Activated naive CD4-positive, alpha-beta T cell treated with anti-CD3 and anti-CD28 coated beads for 36 hours (primary cell): ENCODE measurements at regions of chrX and their contacts with region 1.

Region 1: DNA sequence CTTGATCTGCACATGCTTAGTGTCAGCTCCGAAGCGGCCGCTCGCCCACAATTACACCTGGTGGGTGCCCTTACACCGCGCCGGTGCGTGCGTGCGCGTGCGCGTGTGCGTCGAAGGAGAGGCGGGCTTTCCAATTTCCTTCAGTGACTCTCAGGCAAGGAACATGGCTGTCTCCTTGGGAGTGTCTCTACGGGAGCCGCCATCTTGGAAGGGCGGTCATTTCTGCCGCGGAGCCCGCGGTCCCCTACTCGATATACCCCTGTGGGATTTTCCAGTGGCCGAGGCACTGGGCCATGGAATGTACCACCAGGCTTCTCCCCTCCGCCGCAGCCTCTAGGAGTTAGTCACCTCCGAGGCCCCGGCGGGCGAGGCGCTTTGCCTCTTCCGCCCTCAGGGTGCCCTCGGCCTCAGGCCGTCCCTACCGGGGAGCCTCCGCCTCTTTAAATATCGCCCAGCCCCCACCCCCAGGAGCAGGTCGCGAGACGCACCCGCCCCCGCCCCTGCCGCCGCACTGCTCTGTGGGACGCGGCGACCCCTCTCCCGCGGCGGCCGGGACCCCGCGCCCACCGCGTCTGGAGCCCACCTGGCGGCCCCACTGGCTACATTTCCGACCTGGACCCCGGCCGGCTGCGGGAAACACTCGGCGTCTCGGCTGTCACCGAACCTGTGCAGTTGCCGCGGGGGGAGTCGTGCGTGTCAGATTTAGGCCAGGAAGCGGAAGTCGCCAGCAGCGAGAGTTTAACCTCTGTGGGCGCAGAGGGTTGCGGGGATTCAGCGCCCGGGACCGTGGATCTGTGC is at the start of gene ZNF41:
- DNase-seq: peak; percentile 75
- H3K4me3 Mint-ChIP-seq: peak within 1 kb of the TSS; percentile 94
- H3K27ac Mint-ChIP-seq: peak within 1 kb of the TSS; percentile 96
- H3K4me1 Mint-ChIP-seq: peaks cover 32% of the 10 kb centered on the region
- H3K27me3 Mint-ChIP-seq: no peaks in the 10 kb centered on the region
- total RNA-seq, gene ZNF41: 4.6 to 6.4 TPM

Region 2: GRCh38 chrX:47129157-47129898 is 353.4 kb before region 1 on chrX:
- CTCF ChIA-PET with region 1: no interaction called
- intact Hi-C with region 1: loop called (anchors 2 kb)
- DNase-seq: peak; percentile 95
- H3K4me3 Mint-ChIP-seq: peak overlapping the region; percentile 99
- H3K27ac Mint-ChIP-seq: peak overlapping the region; percentile 98
- H3K4me1 Mint-ChIP-seq: peaks cover 5% of the 10 kb centered on the region
- H3K27me3 Mint-ChIP-seq: no peaks in the 10 kb centered on the region

Region 3: GRCh38 chrX:47217642-47218279 is 264.9 kb before region 1 on chrX:
- CTCF ChIA-PET with region 1: no interaction called
- intact Hi-C with region 1: loop called (anchors 1 kb)
- DNase-seq: peak; percentile 98
- H3K4me3 Mint-ChIP-seq: peak overlapping the region; percentile 80
- H3K27ac Mint-ChIP-seq: peak overlapping the region; percentile 98
- H3K4me1 Mint-ChIP-seq: peaks cover 37% of the 10 kb centered on the region
- H3K27me3 Mint-ChIP-seq: no peaks in the 10 kb centered on the region

Region 4: GRCh38 chrX:47384502-47384901 is 98.2 kb before region 1 on chrX:
- CTCF ChIA-PET with region 1: interaction called, 3 read pairs
- intact Hi-C with region 1: loop called (anchors 5 kb)
- DNase-seq: peak; percentile 79
- H3K4me3 Mint-ChIP-seq: no peak overlapping the region
- H3K27ac Mint-ChIP-seq: no peak overlapping the region
- H3K4me1 Mint-ChIP-seq: peaks cover 25% of the 10 kb centered on the region
- H3K27me3 Mint-ChIP-seq: no peaks in the 10 kb centered on the region

Region 5: DNA sequence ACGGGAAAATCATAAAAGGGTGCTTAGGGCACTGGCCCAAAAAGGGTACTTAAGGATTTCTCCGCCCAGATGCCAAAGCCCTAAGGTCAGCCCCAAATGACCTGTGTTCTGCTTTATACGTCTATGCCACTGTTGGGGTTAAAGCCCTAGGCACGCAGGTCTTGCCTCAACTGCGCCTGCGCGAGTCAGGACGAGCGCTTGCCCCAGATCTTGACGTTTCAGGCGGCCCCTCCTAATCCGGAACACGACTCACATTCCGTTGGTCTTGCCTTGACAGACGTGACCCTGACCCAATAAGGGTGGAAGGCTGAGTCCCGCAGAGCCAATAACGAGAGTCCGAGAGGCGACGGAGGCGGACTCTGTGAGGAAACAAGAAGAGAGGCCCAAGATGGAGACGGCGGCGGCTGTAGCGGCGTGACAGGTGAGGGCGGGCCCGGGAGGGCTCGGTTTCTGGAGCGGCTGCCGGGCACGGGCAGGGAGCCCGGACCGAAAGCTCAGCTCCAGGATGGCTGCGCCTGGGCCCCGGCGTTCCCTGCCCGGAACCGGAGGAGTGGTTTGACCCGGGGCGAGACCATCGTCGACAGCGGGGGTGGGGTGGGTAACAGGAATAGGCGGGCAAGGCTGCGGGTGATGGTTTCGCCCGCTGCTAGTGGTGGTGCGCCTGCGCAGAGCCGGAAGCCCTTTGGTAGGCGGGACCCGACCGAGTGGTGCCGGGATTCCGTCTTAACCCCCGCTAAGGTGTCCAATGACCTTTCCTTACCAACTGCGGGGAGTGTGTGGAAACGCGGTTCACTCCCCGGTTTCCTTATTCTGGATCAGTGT is 78.3 kb after region 1 on chrX and contains the start of gene ARAF:
- CTCF ChIA-PET with region 1: no interaction called
- intact Hi-C with region 1: loop called (anchors 1 kb)
- DNase-seq: peak; percentile 98
- H3K4me3 Mint-ChIP-seq: peak within 1 kb of the TSS; percentile 81
- H3K27ac Mint-ChIP-seq: peak within 1 kb of the TSS; percentile 96
- H3K4me1 Mint-ChIP-seq: peaks cover 35% of the 10 kb centered on the region
- H3K27me3 Mint-ChIP-seq: no peaks in the 10 kb centered on the region
- total RNA-seq, gene ARAF: 65.9 to 71.5 TPM

Region 6: GRCh38 chrX:47608130-47608810 is 125.6 kb after region 1 on chrX:
- CTCF ChIA-PET with region 1: no interaction called
- intact Hi-C with region 1: no loop called
- DNase-seq: no peak
- H3K4me3 Mint-ChIP-seq: no peak overlapping the region
- H3K27ac Mint-ChIP-seq: no peak overlapping the region
- H3K4me1 Mint-ChIP-seq: peaks cover 6% of the 10 kb centered on the region
- H3K27me3 Mint-ChIP-seq: no peaks in the 10 kb centered on the region

Region 7: DNA sequence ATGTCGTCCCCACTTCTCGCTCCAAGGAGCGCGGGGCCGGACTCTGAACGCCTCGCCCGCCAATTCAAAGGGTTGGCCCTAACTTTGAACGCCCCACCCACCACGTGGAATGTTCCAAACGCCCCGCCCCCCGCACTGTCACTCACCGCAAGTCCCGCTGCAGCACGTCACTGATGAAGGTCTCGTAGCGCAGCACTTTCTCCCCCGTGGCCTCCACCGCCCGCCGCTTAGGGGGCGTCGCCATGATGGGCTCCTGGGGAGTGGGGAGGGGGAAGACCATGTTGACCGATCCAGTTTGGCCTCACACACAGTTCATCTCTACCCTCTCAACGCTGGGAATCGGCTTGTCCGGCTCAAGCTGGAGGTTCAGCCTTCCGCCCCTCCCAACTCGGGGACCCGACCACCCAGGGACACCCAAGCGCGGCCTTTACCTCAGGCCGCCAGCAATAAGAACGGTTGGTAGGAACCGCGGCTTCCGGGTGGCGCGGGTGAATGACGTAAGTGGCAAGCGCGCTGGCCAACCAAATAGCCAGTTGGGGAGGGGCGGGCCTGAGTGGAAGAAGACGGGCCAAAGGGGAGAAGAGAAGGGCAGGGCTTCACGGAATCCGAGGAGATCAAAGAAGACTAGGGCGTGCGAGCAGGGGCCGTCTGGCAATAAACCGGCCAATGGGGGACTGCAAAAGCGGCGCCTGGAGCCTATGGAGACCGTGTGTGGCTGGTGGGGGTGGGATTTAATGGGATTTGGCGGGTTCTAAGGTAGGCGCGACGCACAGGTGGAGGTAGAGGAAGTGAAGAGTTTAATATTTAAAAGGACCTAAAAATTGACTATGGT is 176.2 kb after region 1 on chrX and contains the start of gene UXT:
- CTCF ChIA-PET with region 1: no interaction called
- intact Hi-C with region 1: loop called (anchors 2 kb)
- DNase-seq: peak; percentile 96
- H3K4me3 Mint-ChIP-seq: peak within 1 kb of the TSS; percentile 88
- H3K27ac Mint-ChIP-seq: peak within 1 kb of the TSS; percentile 98
- H3K4me1 Mint-ChIP-seq: peaks cover 46% of the 10 kb centered on the region
- H3K27me3 Mint-ChIP-seq: no peaks in the 10 kb centered on the region
- total RNA-seq, gene UXT: 192 to 198 TPM

Region 8: DNA sequence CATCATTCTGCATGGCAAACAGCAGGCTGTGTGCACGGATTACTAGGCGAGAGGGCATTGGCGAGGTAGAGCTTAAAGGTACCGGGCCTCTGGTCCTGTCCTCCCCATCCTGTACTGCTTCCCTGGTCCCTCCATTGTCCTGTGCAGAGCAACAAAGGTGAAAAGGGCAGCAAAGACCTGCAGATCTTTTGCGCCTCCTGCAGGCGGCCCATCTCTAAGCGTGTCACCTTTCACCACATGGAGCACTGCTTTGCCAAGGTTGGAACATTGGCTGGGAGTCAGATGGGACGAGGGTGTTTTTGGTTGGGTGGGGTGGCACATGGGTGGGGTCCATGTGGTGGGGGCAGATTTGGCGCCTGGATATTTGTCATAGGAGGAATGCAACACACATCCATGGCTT is 241.0 kb after region 1 on chrX:
- CTCF ChIA-PET with region 1: no interaction called
- intact Hi-C with region 1: no loop called
- DNase-seq: peak; percentile 43
- H3K4me3 Mint-ChIP-seq: no peak overlapping the region
- H3K27ac Mint-ChIP-seq: no peak overlapping the region
- H3K4me1 Mint-ChIP-seq: no peaks in the 10 kb centered on the region
- H3K27me3 Mint-ChIP-seq: no peaks in the 10 kb centered on the region